ENCODE measurements at regions of chr14 and their contacts with region 1.

Region 1: GRCh38 chr14:103811189-103811588 is 36.2 kb downstream of the PPP1R13B start:
- DNase-seq: no peak
- CTCF ChIP-seq: no peak

Region 2: DNA sequence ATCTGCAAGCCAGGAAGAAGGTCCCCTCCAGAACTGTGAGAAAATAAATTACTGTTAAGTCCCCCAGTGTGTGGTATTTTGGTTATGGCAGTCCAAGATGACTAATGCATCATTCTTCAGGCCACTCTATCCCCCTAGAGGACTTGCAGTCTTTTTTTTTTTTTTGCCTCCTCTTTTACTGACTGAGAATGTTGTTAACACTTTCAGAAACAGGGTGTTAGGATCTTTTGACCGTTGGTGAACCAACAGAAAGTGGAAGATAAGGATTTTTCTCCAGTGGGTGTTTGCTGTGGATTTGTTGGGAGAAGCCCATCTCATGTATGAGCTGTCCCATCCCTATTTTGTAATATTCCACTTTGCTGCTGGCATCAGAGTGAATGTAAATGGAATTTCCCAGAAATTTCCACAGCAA is 388.1 kb before region 1 on chr14:
- in situ Hi-C with region 1: no loop called
- DNase-seq: no peak
- CTCF ChIP-seq: no peak

Region 3: GRCh38 chr14:103436533-103436932 is 374.7 kb before region 1 on chr14:
- in situ Hi-C with region 1: no loop called
- DNase-seq: no peak
- CTCF ChIP-seq: no peak

Region 4: GRCh38 chr14:103905842-103906456 is 94.8 kb after region 1 on chr14:
- in situ Hi-C with region 1: loop called (anchors 5 kb)
- DNase-seq: peak; percentile 44
- CTCF ChIP-seq: peak; percentile 14

Region 5: DNA sequence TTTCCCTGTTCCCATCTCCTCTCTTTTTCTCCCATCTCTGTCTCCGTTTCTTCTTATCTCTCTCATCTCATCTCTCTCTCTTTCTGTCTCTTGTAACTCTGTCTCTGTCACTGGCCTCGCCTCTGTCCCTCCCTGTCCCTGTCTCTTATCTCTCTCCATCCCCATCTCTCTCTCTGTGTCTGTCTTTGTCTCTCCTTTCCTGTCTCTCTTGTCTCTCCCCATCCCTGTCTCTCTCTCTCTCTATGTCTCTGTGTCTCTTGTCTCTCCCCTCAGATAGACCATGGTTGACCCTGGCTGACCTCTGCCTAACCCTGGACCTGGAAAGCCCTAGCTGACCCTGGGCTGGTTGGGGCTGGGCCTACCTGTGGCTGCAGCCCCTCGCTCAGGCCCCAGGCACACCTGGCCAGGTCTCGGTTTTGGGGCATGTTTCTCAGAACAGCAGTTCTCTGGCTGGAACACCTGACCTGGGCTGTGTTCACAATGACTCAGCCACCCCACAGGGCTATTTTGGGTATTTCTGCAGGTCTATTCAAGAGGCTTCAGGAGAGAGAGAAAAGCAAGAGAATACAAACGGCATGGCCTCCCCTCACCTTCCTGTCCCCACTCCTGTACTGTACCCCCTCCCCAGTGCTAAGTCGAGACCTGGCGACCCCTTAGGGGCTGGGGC is 1889.6 kb after region 1 on chr14:
- in situ Hi-C with region 1: no loop called
- DNase-seq: peak; percentile 77
- CTCF ChIP-seq: no peak